HEK293T (cell line): ENCODE measurements at regions of chr11 and their contacts with region 1.

Region 1: GRCh38 chr11:73307323-73308002 is 613 bp upstream of the ARHGEF17 start:
- DNase-seq: peak; percentile 96

Region 2: DNA sequence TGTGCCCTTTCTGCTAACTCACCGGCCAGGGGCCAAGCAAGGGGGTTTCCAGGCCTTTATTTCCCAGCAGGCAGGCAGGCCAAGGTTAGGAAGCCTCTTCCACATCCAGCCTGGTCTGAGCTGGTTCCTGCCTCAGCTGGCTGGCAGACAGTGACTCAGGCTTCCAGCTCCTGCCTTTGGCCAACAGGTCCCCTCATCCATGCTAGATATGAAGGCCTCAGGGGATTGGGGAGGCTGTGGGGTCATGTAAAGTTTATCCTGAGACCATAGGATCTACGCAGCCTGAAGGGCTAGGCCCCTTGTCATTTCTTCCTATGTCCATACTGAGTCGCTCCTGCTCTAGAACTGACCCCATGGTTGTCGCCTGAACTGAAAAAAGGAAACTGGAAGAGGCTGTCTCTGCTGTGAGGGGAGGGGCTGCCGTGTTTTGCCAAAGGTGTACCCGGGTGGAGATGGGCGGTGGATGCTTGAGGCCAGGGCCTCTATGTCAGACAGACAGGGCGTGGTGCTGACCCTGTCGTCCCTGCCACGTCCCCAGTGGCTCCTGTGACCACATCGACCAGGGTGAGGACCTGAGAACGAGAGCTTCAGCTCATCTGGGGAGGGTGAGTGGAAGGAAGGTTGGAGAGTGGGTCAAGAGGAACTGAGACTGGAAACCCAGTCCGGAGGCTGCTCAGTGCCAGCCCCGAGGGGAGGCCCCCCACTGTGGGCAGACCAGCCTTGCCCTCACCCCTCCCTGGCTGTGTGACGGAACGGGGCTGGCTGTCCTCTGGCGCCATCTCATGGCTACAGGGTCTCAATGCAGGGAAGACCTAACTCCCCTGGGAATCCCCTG is 18.4 kb before region 1 on chr11:
- CTCF ChIA-PET with region 1: interaction called, 14 read pairs
- POLR2A ChIA-PET with region 1: no interaction called
- DNase-seq: peak; percentile 88

Region 3: DNA sequence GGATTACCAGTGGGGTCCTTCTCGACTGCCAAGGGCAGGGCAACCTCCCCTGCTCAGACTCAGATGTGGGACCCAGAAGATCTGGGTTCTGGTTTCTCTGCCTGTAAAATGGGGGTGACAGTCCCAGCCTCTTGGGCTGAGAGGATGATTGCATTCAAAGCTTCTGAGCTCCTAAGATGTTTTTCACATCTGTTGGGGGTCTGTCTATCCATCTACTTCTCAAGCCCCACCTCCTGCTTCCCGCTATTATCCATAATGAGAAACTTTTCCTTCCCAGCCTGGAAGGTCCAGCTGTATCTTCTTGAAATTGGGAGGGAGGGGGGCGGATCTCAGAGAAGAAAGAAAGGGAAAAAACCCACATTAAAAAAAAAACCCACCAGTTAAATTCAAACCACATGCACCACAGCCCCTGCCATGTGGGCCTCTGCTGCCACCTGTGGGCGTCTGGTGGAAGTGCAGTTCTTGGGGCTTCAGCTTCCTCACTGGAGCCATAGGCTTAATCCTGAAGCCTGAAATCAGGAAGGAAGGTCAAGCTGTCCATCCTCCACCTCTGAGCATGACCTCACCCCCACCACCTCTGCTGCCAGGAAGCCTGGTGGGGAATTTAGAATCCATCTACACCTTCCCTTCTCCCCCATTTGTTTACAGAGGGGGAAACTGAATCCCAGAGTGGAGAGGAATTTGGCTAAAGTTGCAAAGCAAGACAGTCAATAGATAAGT is 27.9 kb after region 1 on chr11:
- CTCF ChIA-PET with region 1: interaction called, 53 read pairs
- POLR2A ChIA-PET with region 1: interaction called, 6 read pairs
- DNase-seq: peak; percentile 87

Region 4: GRCh38 chr11:73350908-73351636 is 43.6 kb after region 1 on chr11:
- CTCF ChIA-PET with region 1: interaction called, 17 read pairs
- POLR2A ChIA-PET with region 1: no interaction called
- DNase-seq: peak; percentile 78

Region 5: GRCh38 chr11:73393479-73394380 is 86.3 kb after region 1 on chr11:
- CTCF ChIA-PET with region 1: interaction called, 10 read pairs
- POLR2A ChIA-PET with region 1: no interaction called
- DNase-seq: peak; percentile 81